Activated T-helper 1 cell treated with anti-CD3 and anti-CD28 coated beads, Interleukin-12 subunit alpha, Interleukin-12 subunit beta, Interleukin-2, Interleukin-4 antibody, amounts not matched to agents 30 ng/mL and 10 ng/mL and 1 ng/mL, durations not matched to agents 14 hours and 24 hours and 36 hours (primary cell): ENCODE measurements at regions of chr1 and their contacts with region 1.

Region 1: GRCh38 chr1:85276215-85276977 is at the start of gene BCL10:
- DNase-seq: peak; percentile 98
- H3K4me3 Mint-ChIP-seq: peak within 1 kb of the TSS; percentile 88
- H3K27ac Mint-ChIP-seq: peak within 1 kb of the TSS; percentile 87
- H3K4me1 Mint-ChIP-seq: peaks cover 67% of the 10 kb centered on the region
- H3K27me3 Mint-ChIP-seq: peaks cover 11% of the 10 kb centered on the region
- total RNA-seq, gene BCL10: 25.1 and 28.8 TPM in 2 replicates

Region 2: GRCh38 chr1:83998498-83999315 is 1277.7 kb before region 1 on chr1 and contains the start of gene TTLL7:
- intact Hi-C with region 1: loop called (anchors 5 kb)
- DNase-seq: peak; percentile 62
- H3K4me3 Mint-ChIP-seq: peak within 1 kb of the TSS; percentile 89
- H3K27ac Mint-ChIP-seq: peak within 1 kb of the TSS; percentile 56
- H3K4me1 Mint-ChIP-seq: peaks cover 24% of the 10 kb centered on the region
- H3K27me3 Mint-ChIP-seq: peaks cover 60% of the 10 kb centered on the region
- total RNA-seq, gene TTLL7: 0.15 and 0.29 TPM in 2 replicates

Region 3: DNA sequence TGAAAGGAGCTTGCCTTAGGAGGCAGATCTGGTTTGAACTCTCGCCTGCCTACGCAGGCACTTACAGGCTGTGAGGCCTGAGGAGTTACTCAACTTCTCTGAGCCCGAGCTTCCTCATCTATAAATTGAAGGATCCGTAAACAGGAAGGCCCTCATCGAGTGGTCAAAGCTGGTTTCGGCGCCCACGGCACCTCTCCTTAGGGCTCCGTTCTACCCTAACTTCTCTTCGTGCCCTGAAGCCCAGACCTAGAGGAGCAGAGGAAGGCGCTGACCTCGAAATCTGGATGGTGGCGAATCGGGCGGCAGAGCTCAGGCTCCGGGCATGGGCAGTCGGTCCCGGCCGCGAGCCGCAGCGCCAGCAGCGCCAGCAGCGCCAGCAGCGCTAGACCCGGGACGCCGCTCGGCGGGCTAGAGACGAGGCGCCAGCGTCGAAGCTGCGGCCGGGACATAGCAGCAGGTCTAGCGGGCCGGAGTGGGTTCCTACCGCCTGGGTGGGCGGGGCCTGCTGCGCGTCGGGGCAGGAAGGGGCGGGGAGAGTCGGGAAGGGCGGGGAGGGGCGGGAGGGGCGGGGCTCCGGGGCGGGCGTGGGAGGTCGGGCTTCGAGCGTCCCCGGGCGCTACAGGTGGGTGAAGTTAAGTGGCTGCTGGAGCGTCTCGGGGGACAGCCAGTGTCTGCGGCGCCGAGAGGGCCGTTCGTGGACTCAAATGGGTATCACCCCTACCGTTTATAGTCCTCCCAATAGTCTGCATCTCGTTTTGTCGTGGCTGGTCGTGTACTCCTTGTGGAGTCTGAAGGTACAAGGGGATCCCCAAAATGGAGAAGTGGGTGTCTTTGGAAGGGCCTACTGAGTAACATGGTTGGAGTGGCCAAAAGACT is 702.2 kb before region 1 on chr1 and contains the start of gene CTBS:
- intact Hi-C with region 1: loop called (anchors 1 kb)
- DNase-seq: peak; percentile 76
- H3K4me3 Mint-ChIP-seq: peak within 1 kb of the TSS; percentile 98
- H3K27ac Mint-ChIP-seq: peak within 1 kb of the TSS; percentile 100
- H3K4me1 Mint-ChIP-seq: peaks cover 48% of the 10 kb centered on the region
- H3K27me3 Mint-ChIP-seq: peaks cover 2% of the 10 kb centered on the region
- total RNA-seq, gene CTBS: 14.2 and 14.5 TPM in 2 replicates

Region 4: GRCh38 chr1:84944767-84945486 is 331.5 kb before region 1 on chr1:
- intact Hi-C with region 1: loop called (anchors 1 kb)
- DNase-seq: peak; percentile 77
- H3K4me3 Mint-ChIP-seq: peak overlapping the region; percentile 81
- H3K27ac Mint-ChIP-seq: peak overlapping the region; percentile 91
- H3K4me1 Mint-ChIP-seq: peaks cover 39% of the 10 kb centered on the region
- H3K27me3 Mint-ChIP-seq: no peaks in the 10 kb centered on the region

Region 5: DNA sequence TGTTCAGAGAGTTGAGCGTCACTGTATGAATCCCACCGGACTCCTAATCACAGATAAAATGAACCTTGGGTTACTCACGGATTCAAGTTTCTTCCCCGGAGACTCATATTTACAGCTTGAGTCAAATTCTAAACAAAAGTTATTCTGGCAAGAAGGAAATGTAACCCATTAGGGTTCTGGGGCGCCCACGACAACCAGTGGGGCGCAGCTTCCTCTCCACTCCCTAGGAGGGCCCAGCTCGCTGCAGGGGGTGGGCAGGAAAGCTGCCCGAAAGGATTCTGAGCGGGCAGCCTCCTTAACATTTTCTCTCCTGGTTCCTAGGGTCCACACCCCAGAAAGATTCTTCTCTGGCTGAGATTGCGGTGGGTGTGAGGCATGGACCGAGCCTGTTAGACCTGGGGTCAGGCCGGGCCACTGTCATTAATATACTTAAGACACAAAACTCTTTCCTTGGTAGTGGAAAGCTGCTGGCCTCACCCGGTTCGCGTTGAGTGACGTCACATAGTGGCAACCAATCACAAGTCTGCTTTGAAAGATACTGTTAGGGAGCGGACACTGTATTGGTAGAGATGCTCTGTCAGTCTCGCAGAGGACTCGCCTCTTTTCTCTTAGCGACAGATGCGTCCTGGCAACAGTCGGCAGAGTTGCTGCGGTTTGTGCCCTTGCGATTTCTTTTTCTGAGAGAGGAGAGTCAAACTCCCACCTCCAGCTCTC is 214.5 kb before region 1 on chr1:
- intact Hi-C with region 1: loop called (anchors 1 kb)
- DNase-seq: peak; percentile 87
- H3K4me3 Mint-ChIP-seq: peak overlapping the region; percentile 85
- H3K27ac Mint-ChIP-seq: peak overlapping the region; percentile 62
- H3K4me1 Mint-ChIP-seq: peaks cover 15% of the 10 kb centered on the region
- H3K27me3 Mint-ChIP-seq: peaks cover 16% of the 10 kb centered on the region

Region 6: GRCh38 chr1:85297855-85298629 is 21.6 kb after region 1 on chr1:
- intact Hi-C with region 1: loop called (anchors 1 kb)
- DNase-seq: peak; percentile 62
- H3K4me3 Mint-ChIP-seq: peak overlapping the region; percentile 1
- H3K27ac Mint-ChIP-seq: peak overlapping the region; percentile 80
- H3K4me1 Mint-ChIP-seq: peaks cover 34% of the 10 kb centered on the region
- H3K27me3 Mint-ChIP-seq: peaks cover 47% of the 10 kb centered on the region

Region 7: GRCh38 chr1:85707990-85708828 is 431.8 kb after region 1 on chr1 and contains the start of gene ZNHIT6:
- intact Hi-C with region 1: loop called (anchors 1 kb)
- DNase-seq: peak; percentile 82
- H3K4me3 Mint-ChIP-seq: no peak within 1 kb of the TSS
- H3K27ac Mint-ChIP-seq: no peak within 1 kb of the TSS
- H3K4me1 Mint-ChIP-seq: peaks cover 11% of the 10 kb centered on the region
- H3K27me3 Mint-ChIP-seq: no peaks in the 10 kb centered on the region
- total RNA-seq, gene ZNHIT6: 24.6 and 26.3 TPM in 2 replicates